PC-3 (cell line): ENCODE measurements at regions of chr2 and their contacts with region 1.

Region 1: DNA sequence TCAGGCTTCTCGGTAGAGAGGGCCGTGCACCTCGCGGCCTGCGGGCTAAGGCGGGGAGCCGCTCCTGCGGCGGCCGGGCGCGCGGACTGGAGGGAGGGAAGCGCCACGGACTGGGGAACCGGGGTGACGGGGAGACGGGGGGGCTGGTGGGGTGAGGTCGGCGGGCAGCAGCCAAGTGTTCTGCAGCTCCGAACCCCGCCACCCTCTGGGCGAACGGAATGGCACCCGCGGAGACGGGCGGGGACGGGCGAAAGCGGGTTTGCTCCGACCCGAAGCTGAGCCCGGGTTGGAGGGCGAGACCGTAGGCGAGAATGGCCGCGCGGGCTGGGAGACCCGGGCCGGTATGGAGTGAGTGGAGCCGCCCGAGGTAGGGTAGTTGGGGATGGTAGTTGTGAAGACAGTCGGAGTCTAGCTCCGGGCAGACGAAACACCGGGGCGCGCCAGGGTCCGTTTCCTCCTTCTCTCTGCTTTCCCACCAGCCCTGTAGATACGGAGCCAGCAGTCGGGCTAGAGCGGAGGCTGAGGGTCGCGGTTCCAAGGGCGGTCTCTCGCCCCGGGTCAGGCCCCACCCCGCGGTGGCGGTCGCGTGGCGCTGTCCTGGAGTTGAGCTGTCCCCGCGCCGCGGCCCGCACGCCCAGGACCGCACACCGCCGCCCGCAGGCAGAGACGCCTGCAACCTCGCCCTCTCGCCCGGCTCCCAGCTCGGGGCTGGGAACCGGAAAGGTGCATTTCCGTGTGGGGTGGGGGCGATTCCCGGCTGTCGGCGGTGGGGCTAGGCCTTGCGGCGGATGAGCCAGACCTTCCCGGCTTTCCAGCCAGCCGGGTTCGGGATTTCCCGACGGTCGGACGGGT is 160.3 kb upstream of the SIX2 start:
- DNase-seq: peak; percentile 39
- ATAC-seq: peak; percentile 24
- H3K4me3 ChIP-seq: peak overlapping the region; percentile 73
- H3K27ac ChIP-seq: peak overlapping the region; percentile 93
- H3K4me1 ChIP-seq: peaks cover 74% of the 10 kb centered on the region
- H3K27me3 ChIP-seq: no peaks in the 10 kb centered on the region
- CTCF ChIP-seq: no peak

Region 2: GRCh38 chr2:44560352-44560751 is 609.2 kb before region 1 on chr2:
- CTCF ChIA-PET with region 1: no interaction called
- POLR2A ChIA-PET with region 1: no interaction called
- intact Hi-C with region 1: no loop called
- DNase-seq: peak; percentile 58
- ATAC-seq: no peak
- H3K4me3 ChIP-seq: no peak overlapping the region
- H3K27ac ChIP-seq: no peak overlapping the region
- H3K4me1 ChIP-seq: peaks cover 10% of the 10 kb centered on the region
- H3K27me3 ChIP-seq: no peaks in the 10 kb centered on the region
- CTCF ChIP-seq: peak; percentile 67

Region 3: GRCh38 chr2:45024600-45025291 is 144.8 kb before region 1 on chr2:
- CTCF ChIA-PET with region 1: interaction called, 8 read pairs
- POLR2A ChIA-PET with region 1: no interaction called
- intact Hi-C with region 1: loop called (anchors 2 kb)
- DNase-seq: peak; percentile 99
- ATAC-seq: peak; percentile 88
- H3K4me3 ChIP-seq: no peak overlapping the region
- H3K27ac ChIP-seq: peak overlapping the region; percentile 62
- H3K4me1 ChIP-seq: peaks cover 13% of the 10 kb centered on the region
- H3K27me3 ChIP-seq: no peaks in the 10 kb centered on the region
- CTCF ChIP-seq: peak; percentile 92

Region 4: GRCh38 chr2:45128580-45128997 is 41.0 kb before region 1 on chr2:
- CTCF ChIA-PET with region 1: interaction called, 3 read pairs
- POLR2A ChIA-PET with region 1: no interaction called
- intact Hi-C with region 1: loop called (anchors 2 kb)
- DNase-seq: peak; percentile 99
- ATAC-seq: peak; percentile 85
- H3K4me3 ChIP-seq: no peak overlapping the region
- H3K27ac ChIP-seq: peak overlapping the region; percentile 78
- H3K4me1 ChIP-seq: peaks cover 49% of the 10 kb centered on the region
- H3K27me3 ChIP-seq: no peaks in the 10 kb centered on the region
- CTCF ChIP-seq: peak; percentile 55

Region 5: DNA sequence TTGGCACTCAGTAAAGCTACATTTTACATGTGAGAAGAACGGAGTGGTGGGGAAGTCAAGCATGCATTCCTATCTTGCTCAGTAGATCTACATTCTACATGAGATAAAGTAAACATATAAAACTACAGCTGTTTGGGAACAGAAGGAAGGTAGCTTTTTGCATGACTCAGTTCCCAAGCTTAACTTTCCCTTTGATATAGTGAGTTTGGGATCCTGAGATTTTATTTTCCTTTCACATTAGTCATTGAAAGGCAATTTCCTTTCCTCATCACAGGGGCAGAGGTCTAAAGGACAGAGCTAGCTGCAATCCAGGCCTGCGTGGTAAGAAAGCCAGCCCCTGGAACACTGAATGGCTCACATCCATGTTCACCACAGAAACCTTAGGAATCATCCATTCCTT is 184.3 kb after region 1 on chr2:
- CTCF ChIA-PET with region 1: no interaction called
- POLR2A ChIA-PET with region 1: interaction called, 14 read pairs
- intact Hi-C with region 1: loop called (anchors 5 kb)
- DNase-seq: peak; percentile 98
- ATAC-seq: peak; percentile 96
- H3K4me3 ChIP-seq: no peak overlapping the region
- H3K27ac ChIP-seq: peak overlapping the region; percentile 95
- H3K4me1 ChIP-seq: peaks cover 30% of the 10 kb centered on the region
- H3K27me3 ChIP-seq: no peaks in the 10 kb centered on the region
- CTCF ChIP-seq: no peak

Region 6: GRCh38 chr2:45439788-45440773 is 270.5 kb after region 1 on chr2:
- CTCF ChIA-PET with region 1: interaction called, 4 read pairs
- POLR2A ChIA-PET with region 1: no interaction called
- intact Hi-C with region 1: loop called (anchors 5 kb)
- DNase-seq: peak; percentile 59
- ATAC-seq: peak; percentile 76
- H3K4me3 ChIP-seq: no peak overlapping the region
- H3K27ac ChIP-seq: peak overlapping the region; percentile 71
- H3K4me1 ChIP-seq: peaks cover 21% of the 10 kb centered on the region
- H3K27me3 ChIP-seq: no peaks in the 10 kb centered on the region
- CTCF ChIP-seq: peak; percentile 80

Region 7: GRCh38 chr2:46410273-46411247 is 1241.0 kb after region 1 on chr2:
- CTCF ChIA-PET with region 1: no interaction called
- POLR2A ChIA-PET with region 1: interaction called, 10 read pairs
- intact Hi-C with region 1: no loop called
- DNase-seq: no peak
- ATAC-seq: no peak
- H3K4me3 ChIP-seq: no peak overlapping the region
- H3K27ac ChIP-seq: peak overlapping the region; percentile 99
- H3K4me1 ChIP-seq: peaks cover 71% of the 10 kb centered on the region
- H3K27me3 ChIP-seq: no peaks in the 10 kb centered on the region
- CTCF ChIP-seq: no peak